ENCODE measurements at regions of chr3 and their contacts with region 1.

Region 1: DNA sequence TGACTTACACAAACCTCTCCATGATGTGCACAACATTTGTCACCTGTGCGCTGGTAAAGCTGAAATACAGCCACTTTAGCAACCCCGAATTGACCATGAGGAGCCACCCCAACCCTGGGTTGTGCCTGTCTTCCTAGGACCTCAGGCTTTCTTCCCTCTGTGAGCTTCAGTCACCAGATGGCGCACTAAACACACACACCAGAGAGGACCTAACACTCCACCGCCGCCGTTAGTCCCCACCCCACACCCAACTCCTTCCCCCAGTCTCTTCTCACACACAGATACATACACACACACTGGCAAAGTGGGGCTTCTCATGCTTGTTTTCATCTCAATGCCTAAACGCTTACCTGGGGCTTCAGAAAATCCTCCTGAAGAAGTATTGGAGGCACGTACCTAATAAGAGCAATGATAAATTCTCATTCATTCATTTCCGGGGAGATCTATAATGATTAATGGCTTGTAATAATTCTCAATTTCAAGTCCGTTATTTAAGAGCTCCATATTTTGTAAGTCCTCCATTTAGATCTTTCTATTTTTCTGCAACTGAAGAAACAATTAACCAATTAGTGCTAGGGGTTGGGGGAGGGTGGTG is 2.1 kb upstream of the CCDC80 start:
- DNase-seq: peak; percentile 51 to 80 (median 72)
- ATAC-seq: peak; percentile 97
- H3K4me3 ChIP-seq: peak overlapping the region; percentile 39
- H3K4me3 Mint-ChIP-seq: peak overlapping the region; percentile 6 to 81 (median 66)
- H3K27ac ChIP-seq: no peak overlapping the region
- H3K27ac Mint-ChIP-seq: peak overlapping the region in 2 of 9 donors; percentile 41 to 57
- H3K4me1 ChIP-seq: peaks cover 0 to 14% of the 10 kb centered on the region in 2 donors
- H3K4me1 Mint-ChIP-seq: peaks cover 7 to 24% (median 9%) of the 10 kb centered on the region in 7 donors
- H3K27me3 ChIP-seq: no peaks in the 10 kb centered on the region
- H3K27me3 Mint-ChIP-seq: peaks cover 0 to 16% (median 11%) of the 10 kb centered on the region in 5 donors

Region 2: DNA sequence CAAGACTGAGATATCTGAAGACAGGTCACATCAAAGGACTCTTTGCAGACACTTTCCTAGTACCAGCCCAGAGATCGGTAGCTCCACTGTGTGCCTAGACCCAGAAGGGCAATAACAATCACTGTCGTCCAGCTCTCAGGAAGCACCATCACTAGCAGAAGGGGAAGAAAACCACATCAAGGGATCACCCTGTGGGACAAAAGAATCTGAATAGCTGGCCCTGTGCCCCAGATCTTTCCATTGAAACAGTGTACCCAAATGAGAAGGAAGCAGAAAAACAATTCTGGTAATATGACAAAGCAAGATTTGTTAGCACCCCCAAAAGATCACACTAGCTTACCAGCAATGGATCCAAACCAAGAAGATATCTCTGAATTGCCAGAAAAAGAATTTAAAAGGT is 1975.8 kb before region 1 on chr3:
- CTCF ChIA-PET with region 1: no interaction called
- POLR2A ChIA-PET with region 1: no interaction called
- intact Hi-C with region 1: no loop called
- DNase-seq: no peak
- ATAC-seq: no peak
- H3K4me3 ChIP-seq: no peak overlapping the region
- H3K4me3 Mint-ChIP-seq: no peak overlapping the region
- H3K27ac ChIP-seq: no peak overlapping the region
- H3K27ac Mint-ChIP-seq: no peak overlapping the region
- H3K4me1 ChIP-seq: no peaks in the 10 kb centered on the region
- H3K4me1 Mint-ChIP-seq: no peaks in the 10 kb centered on the region
- H3K27me3 ChIP-seq: no peaks in the 10 kb centered on the region
- H3K27me3 Mint-ChIP-seq: peaks cover 0 to 19% (median 14%) of the 10 kb centered on the region in 5 donors

Region 3: GRCh38 chr3:112676659-112677234 is 33.7 kb after region 1 on chr3:
- CTCF ChIA-PET with region 1: no interaction called
- POLR2A ChIA-PET with region 1: no interaction called
- intact Hi-C with region 1: loop called in 1 of 2 experiments (anchors 1 kb)
- DNase-seq: peak in 7 of 9 donors; percentile 5 to 76 (median 30)
- ATAC-seq: peak; percentile 94
- H3K4me3 ChIP-seq: no peak overlapping the region
- H3K4me3 Mint-ChIP-seq: peak overlapping the region in 4 of 10 donors; percentile 11 to 80 (median 16)
- H3K27ac ChIP-seq: no peak overlapping the region
- H3K27ac Mint-ChIP-seq: peak overlapping the region in 5 of 9 donors; percentile 20 to 94 (median 24)
- H3K4me1 ChIP-seq: peaks cover 23 to 39% of the 10 kb centered on the region in 2 donors
- H3K4me1 Mint-ChIP-seq: peaks cover 30 to 69% (median 34%) of the 10 kb centered on the region in 7 donors
- H3K27me3 ChIP-seq: no peaks in the 10 kb centered on the region
- H3K27me3 Mint-ChIP-seq: no peaks in the 10 kb centered on the region

Region 4: DNA sequence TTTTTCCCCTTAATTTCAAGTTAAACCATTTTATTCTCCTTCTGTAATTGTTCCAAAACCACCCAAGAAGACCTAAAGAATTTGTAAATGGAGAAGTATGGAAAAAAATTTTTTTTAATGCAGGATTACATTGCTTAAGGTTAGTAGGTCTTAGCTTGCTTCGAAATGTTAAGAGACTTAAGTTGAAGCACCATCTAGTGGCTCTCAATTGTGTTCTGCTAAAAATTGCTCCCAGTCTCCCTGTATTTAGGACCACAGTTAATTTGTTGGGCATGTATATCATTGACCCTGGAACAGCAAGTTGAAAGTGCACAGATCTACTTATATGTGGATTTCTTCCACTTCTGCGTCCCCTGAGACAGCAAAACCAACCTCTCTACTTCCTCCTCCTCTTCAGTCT is 171.3 kb after region 1 on chr3:
- CTCF ChIA-PET with region 1: interaction called, 15 read pairs
- POLR2A ChIA-PET with region 1: no interaction called
- intact Hi-C with region 1: loop called (anchors 1 kb)
- DNase-seq: no peak
- ATAC-seq: no peak
- H3K4me3 ChIP-seq: no peak overlapping the region
- H3K4me3 Mint-ChIP-seq: no peak overlapping the region
- H3K27ac ChIP-seq: no peak overlapping the region
- H3K27ac Mint-ChIP-seq: no peak overlapping the region
- H3K4me1 ChIP-seq: no peaks in the 10 kb centered on the region
- H3K4me1 Mint-ChIP-seq: peaks cover 18 to 28% (median 23%) of the 10 kb centered on the region in 7 donors
- H3K27me3 ChIP-seq: no peaks in the 10 kb centered on the region
- H3K27me3 Mint-ChIP-seq: peaks cover 0 to 3% (median 0%) of the 10 kb centered on the region in 5 donors

Region 5: GRCh38 chr3:113035387-113035982 is 392.5 kb after region 1 on chr3:
- CTCF ChIA-PET with region 1: no interaction called
- POLR2A ChIA-PET with region 1: no interaction called
- intact Hi-C with region 1: loop called (anchors 2 to 5 kb)
- DNase-seq: peak in 6 of 9 donors; percentile 34 to 57 (median 44)
- ATAC-seq: peak; percentile 88
- H3K4me3 ChIP-seq: no peak overlapping the region
- H3K4me3 Mint-ChIP-seq: no peak overlapping the region
- H3K27ac ChIP-seq: no peak overlapping the region
- H3K27ac Mint-ChIP-seq: no peak overlapping the region
- H3K4me1 ChIP-seq: no peaks in the 10 kb centered on the region
- H3K4me1 Mint-ChIP-seq: peaks cover 0 to 5% (median 0%) of the 10 kb centered on the region in 7 donors
- H3K27me3 ChIP-seq: no peaks in the 10 kb centered on the region
- H3K27me3 Mint-ChIP-seq: no peaks in the 10 kb centered on the region

Region 6: GRCh38 chr3:113287803-113288648 is 645.0 kb after region 1 on chr3:
- CTCF ChIA-PET with region 1: interaction called, 31 read pairs
- POLR2A ChIA-PET with region 1: no interaction called
- intact Hi-C with region 1: loop called (anchors 1 kb)
- DNase-seq: peak in 6 of 9 donors; percentile 9 to 57 (median 40)
- ATAC-seq: peak; percentile 60
- H3K4me3 ChIP-seq: no peak overlapping the region
- H3K4me3 Mint-ChIP-seq: no peak overlapping the region
- H3K27ac ChIP-seq: no peak overlapping the region
- H3K27ac Mint-ChIP-seq: no peak overlapping the region
- H3K4me1 ChIP-seq: no peaks in the 10 kb centered on the region
- H3K4me1 Mint-ChIP-seq: peaks cover 0 to 4% (median 0%) of the 10 kb centered on the region in 7 donors
- H3K27me3 ChIP-seq: no peaks in the 10 kb centered on the region
- H3K27me3 Mint-ChIP-seq: no peaks in the 10 kb centered on the region